Endothelial cell of umbilical vein (primary cell): ENCODE measurements at regions of chr9 and their contacts with region 1.

Region 1: DNA sequence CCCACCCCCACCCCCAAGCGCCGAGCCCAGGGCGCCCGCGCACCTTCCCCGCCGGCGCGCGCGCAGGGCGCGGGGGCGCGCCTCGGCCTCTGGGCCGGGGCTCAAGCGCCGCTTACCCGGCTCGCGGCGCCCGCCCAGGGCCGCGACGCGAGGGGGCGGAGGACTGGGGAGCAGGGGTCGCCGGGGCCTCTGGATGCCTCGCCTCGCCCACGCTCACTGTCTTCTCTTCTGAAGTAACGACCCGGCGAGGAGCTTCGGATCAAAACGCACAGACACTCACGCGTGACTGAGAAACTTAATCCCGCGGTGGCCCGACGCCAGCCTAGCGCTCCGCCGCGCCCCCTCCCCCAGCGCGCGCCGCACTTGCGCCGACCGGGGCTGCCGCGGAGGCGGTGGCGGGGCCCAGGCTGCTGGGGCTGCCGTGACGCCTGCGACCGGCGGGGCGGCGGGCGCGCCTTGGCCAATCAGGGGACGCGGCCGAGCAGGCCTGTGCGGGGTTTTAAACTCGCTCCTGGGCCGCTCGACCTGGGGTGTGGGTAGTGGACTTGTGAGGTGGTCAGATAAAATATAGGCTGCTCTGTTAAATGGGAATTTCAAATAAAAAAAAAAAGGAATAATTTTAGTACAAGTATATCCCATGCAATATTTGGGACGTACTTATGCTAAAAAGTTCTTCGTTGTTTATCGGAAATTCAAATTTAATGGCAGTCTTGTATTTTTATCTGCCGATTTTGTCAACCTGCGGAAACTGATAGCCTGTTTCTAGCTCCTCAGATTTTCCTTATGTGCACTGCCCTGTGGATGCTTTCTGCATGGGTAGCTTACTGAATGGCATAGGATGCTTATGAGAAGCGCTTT is at the start of gene MPDZ:
- DNase-seq: peak; percentile 81
- H3K4me3 ChIP-seq: peak within 1 kb of the TSS; percentile 22 to 74 (median 74)
- H3K27ac ChIP-seq: peak within 1 kb of the TSS; percentile 91
- H3K4me1 ChIP-seq: peaks cover 25% of the 10 kb centered on the region
- H3K27me3 ChIP-seq: no peaks in the 10 kb centered on the region
- CTCF ChIP-seq: no peak
- POLR2A ChIP-seq: peak; percentile 28
- total RNA-seq, gene MPDZ: 52.3 and 54.4 TPM in 2 replicates

Region 2: DNA sequence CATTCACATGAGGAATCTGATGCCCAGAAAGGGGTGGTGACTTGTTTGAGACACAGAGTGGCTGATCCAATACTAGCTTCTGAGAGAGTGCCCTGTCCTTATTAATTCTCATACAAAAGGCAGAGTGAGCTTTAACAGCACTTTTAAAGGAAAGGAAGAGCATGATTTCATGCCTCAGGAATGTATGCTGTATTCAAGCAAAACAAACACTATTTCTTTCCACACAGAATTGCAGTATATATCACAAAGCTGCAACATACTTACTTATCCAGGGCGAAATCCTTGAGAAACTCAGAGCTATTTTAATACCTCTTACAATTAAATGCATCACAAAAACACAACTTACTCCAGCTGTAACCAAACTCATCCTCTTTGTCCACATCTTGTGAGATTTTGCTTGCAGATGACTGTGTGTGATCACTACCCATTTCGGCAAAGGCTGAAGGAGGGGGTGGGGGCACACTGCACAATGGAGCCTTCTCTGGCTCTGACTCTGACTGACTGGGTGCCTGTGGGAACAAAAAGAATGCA is 139.8 kb before region 1 on chr9:
- CTCF ChIA-PET with region 1: interaction called, 3 read pairs
- POLR2A ChIA-PET with region 1: no interaction called
- dilution Hi-C with region 1: no loop called
- intact Hi-C with region 1: loop called (anchors 5 kb)
- DNase-seq: peak; percentile 95
- H3K4me3 ChIP-seq: peak overlapping the region in 1 of 3 experiments; percentile 40
- H3K27ac ChIP-seq: peak overlapping the region; percentile 96
- H3K4me1 ChIP-seq: peaks cover 23% of the 10 kb centered on the region
- H3K27me3 ChIP-seq: no peaks in the 10 kb centered on the region
- CTCF ChIP-seq: no peak
- POLR2A ChIP-seq: no peak

Region 3: DNA sequence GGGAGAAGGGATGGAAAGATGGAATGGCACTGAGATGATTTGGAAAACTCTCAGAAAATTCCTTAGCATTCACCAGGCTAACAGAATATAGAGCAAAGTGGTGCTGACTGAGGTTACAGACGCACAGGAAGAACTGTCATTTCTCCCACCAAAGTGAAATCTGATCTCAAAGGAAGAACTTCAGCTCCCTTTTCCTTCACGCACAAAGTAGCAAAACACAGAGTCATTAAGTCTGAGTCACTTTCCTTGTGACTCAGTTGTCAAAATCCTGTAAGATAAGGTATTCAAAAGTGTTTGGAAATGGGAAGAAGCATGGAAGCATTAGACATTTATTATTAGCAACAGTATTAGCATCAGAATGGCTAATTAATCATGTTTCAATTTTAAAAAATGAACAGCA is 11.8 kb before region 1 on chr9:
- CTCF ChIA-PET with region 1: interaction called, 9 read pairs
- POLR2A ChIA-PET with region 1: interaction called, 5 read pairs
- dilution Hi-C with region 1: no loop called
- intact Hi-C with region 1: loop called (anchors 1 kb)
- DNase-seq: peak; percentile 97
- H3K4me3 ChIP-seq: peak overlapping the region in 1 of 3 experiments; percentile 48
- H3K27ac ChIP-seq: peak overlapping the region; percentile 88
- H3K4me1 ChIP-seq: peaks cover 62% of the 10 kb centered on the region
- H3K27me3 ChIP-seq: no peaks in the 10 kb centered on the region
- CTCF ChIP-seq: no peak
- POLR2A ChIP-seq: peak; percentile 69

Region 4: DNA sequence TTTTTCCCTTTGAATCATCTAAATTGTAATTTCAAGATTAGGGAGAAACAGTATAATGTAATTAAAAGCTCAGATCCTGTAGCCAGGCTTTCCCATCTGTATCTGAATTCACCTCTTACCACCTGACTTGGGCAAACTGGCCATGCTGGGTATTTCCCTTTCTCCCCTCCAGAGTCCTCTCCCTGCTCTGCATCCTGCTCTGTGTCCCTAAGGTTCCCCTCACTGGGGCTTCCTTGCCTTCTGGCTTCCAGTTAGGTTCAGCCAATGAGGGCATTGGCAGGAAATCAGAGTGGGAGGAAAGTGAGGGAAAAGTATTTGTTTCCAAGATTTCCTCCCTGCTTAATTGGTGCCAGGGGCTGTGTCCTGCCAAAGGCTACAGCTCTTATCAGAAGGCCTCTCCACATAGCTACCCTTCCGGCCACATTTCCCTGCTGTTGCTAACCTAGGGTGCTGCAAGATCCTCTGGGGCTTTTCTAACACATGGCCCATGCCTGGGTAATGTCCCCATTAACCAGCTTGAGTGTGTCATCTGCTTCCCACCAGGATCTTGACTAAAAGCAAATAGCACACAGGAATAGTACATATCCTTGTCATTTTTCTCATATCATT is 51.0 kb after region 1 on chr9:
- CTCF ChIA-PET with region 1: interaction called, 5 read pairs
- POLR2A ChIA-PET with region 1: no interaction called
- dilution Hi-C with region 1: no loop called
- intact Hi-C with region 1: loop called (anchors 1 kb)
- DNase-seq: peak; percentile 91
- H3K4me3 ChIP-seq: no peak overlapping the region
- H3K27ac ChIP-seq: no peak overlapping the region
- H3K4me1 ChIP-seq: peaks cover 12% of the 10 kb centered on the region
- H3K27me3 ChIP-seq: no peaks in the 10 kb centered on the region
- CTCF ChIP-seq: no peak
- POLR2A ChIP-seq: no peak

Region 5: GRCh38 chr9:13568841-13569601 is 289.5 kb after region 1 on chr9:
- CTCF ChIA-PET with region 1: no interaction called
- POLR2A ChIA-PET with region 1: no interaction called
- dilution Hi-C with region 1: no loop called
- intact Hi-C with region 1: loop called (anchors 10 kb)
- DNase-seq: peak; percentile 62
- H3K4me3 ChIP-seq: peak overlapping the region in 2 of 3 experiments; percentile 3 to 45
- H3K27ac ChIP-seq: peak overlapping the region; percentile 54
- H3K4me1 ChIP-seq: peaks cover 25% of the 10 kb centered on the region
- H3K27me3 ChIP-seq: no peaks in the 10 kb centered on the region
- CTCF ChIP-seq: no peak
- POLR2A ChIP-seq: no peak